CD4-positive, alpha-beta T cell (primary cell): ENCODE measurements at regions of chr18 and their contacts with region 1.

Region 1: GRCh38 chr18:31741097-31741735 is 19.5 kb downstream of the SLC25A52 start:
- DNase-seq: peak; percentile 11 to 71 (median 46)
- ATAC-seq: peak; percentile 34
- H3K4me3 ChIP-seq: no peak overlapping the region
- H3K4me3 Mint-ChIP-seq: no peak overlapping the region
- H3K27ac ChIP-seq: no peak overlapping the region
- H3K27ac Mint-ChIP-seq: no peak overlapping the region
- H3K4me1 ChIP-seq: no peaks in the 10 kb centered on the region
- H3K4me1 Mint-ChIP-seq: no peaks in the 10 kb centered on the region
- H3K27me3 ChIP-seq: no peaks in the 10 kb centered on the region
- H3K27me3 Mint-ChIP-seq: peaks cover 4% of the 10 kb centered on the region
- CTCF ChIP-seq: peak; percentile 95

Region 2: GRCh38 chr18:31977270-31977872 is 236.2 kb after region 1 on chr18:
- CTCF ChIA-PET with region 1: no interaction called
- POLR2A ChIA-PET with region 1: no interaction called
- intact Hi-C with region 1: loop called in 1 of 2 experiments (anchors 5 kb)
- DNase-seq: peak in 8 of 14 experiments; percentile 4 to 63 (median 32)
- ATAC-seq: no peak
- H3K4me3 ChIP-seq: no peak overlapping the region
- H3K4me3 Mint-ChIP-seq: no peak overlapping the region
- H3K27ac ChIP-seq: no peak overlapping the region
- H3K27ac Mint-ChIP-seq: no peak overlapping the region
- H3K4me1 ChIP-seq: no peaks in the 10 kb centered on the region
- H3K4me1 Mint-ChIP-seq: no peaks in the 10 kb centered on the region
- H3K27me3 ChIP-seq: no peaks in the 10 kb centered on the region
- H3K27me3 Mint-ChIP-seq: no peaks in the 10 kb centered on the region
- CTCF ChIP-seq: peak; percentile 68

Region 3: DNA sequence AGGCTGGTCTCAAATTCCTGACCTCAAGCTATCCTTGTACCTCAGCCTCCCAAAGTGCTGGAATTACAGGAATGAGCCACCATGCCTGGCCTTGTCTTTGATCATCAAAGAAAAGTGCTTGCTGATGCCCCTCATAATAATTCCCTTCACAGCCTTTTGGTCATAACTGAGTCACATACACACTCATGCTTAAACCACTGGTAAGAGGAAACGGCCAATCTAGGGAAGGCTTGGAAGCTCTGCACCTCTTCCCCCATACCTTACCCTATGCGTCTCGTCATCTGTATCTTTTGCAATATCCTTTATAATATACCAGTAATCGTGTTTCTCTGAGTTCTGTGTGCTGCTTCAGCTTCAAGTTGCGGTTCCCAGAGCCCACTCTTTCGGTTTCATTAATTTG is 345.6 kb after region 1 on chr18:
- CTCF ChIA-PET with region 1: no interaction called
- POLR2A ChIA-PET with region 1: no interaction called
- intact Hi-C with region 1: loop called in 1 of 2 experiments (anchors 10 kb)
- DNase-seq: peak in 2 of 14 experiments; percentile 37 to 56
- ATAC-seq: no peak
- H3K4me3 ChIP-seq: no peak overlapping the region
- H3K4me3 Mint-ChIP-seq: peak overlapping the region; percentile 30
- H3K27ac ChIP-seq: no peak overlapping the region
- H3K27ac Mint-ChIP-seq: peak overlapping the region; percentile 43
- H3K4me1 ChIP-seq: peaks cover 38% of the 10 kb centered on the region
- H3K4me1 Mint-ChIP-seq: peaks cover 53% of the 10 kb centered on the region
- H3K27me3 ChIP-seq: no peaks in the 10 kb centered on the region
- H3K27me3 Mint-ChIP-seq: peaks cover 5% of the 10 kb centered on the region
- CTCF ChIP-seq: no peak